OCI-LY7 (cell line): ENCODE measurements at regions of chr2 and their contacts with region 1.

Region 1: GRCh38 chr2:55401124-55401523 is 18.5 kb downstream of the CCDC88A start:
- DNase-seq: no peak
- H3K4me3 ChIP-seq: no peak overlapping the region
- H3K27ac ChIP-seq: no peak overlapping the region
- H3K4me1 ChIP-seq: no peaks in the 10 kb centered on the region
- CTCF ChIP-seq: no peak

Region 2: GRCh38 chr2:55384786-55385185 is 16.3 kb before region 1 on chr2:
- CTCF ChIA-PET with region 1: no interaction called
- POLR2A ChIA-PET with region 1: interaction called, 10 read pairs
- intact Hi-C with region 1: no loop called
- DNase-seq: no peak
- H3K4me3 ChIP-seq: no peak overlapping the region
- H3K27ac ChIP-seq: no peak overlapping the region
- H3K4me1 ChIP-seq: peaks cover 3% of the 10 kb centered on the region
- CTCF ChIP-seq: no peak